Endothelial cell of umbilical vein (primary cell): ENCODE measurements at regions of chr6 and their contacts with region 1.

Region 1: DNA sequence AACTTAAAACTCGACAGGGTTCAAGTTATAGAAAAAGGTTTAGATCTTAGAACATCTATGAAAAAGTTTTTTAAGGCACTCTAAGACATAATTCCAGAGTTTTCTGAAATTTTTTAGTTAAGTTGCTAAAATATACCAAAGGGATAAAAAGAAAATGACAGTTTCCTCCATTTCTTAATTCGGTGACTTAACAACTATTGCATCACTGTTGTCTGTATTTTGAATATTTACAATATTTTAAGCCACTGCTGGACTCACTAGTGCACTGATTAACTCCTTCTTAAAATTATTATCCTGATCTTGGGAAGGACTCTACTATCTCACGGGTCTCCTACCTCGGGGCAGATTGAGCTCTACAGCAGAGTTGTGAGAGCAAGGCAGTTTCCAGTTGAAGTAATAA is 91.0 kb downstream of the ADGB start:
- DNase-seq: no peak
- H3K4me3 ChIP-seq: no peak overlapping the region
- H3K27ac ChIP-seq: no peak overlapping the region
- H3K4me1 ChIP-seq: no peaks in the 10 kb centered on the region
- H3K27me3 ChIP-seq: peaks cover 2 to 8% of the 10 kb centered on the region in 2 experiments
- CTCF ChIP-seq: no peak
- POLR2A ChIP-seq: no peak

Region 2: DNA sequence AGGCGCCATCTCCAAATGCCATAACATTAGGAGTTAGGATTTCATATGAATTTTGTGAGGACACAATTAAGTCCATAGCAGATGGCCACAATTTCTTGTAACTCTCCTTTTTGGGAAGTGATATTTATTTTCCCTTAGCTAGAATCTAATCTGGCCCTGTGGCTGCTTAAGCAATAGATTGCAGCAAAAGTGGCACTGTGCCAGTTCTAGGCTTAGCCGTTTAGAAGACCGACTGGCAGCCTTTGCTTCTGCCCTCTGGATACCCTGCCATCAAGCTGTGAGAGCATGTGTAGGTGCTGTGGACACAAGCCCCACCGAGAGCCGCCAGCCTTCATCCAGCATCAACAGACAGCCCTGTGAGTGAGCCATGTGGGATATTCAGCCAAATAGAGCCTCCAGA is 106.9 kb before region 1 on chr6:
- CTCF ChIA-PET with region 1: no interaction called
- POLR2A ChIA-PET with region 1: no interaction called
- dilution Hi-C with region 1: no loop called
- intact Hi-C with region 1: loop called (anchors 5 kb)
- DNase-seq: no peak
- H3K4me3 ChIP-seq: no peak overlapping the region
- H3K27ac ChIP-seq: no peak overlapping the region
- H3K4me1 ChIP-seq: no peaks in the 10 kb centered on the region
- H3K27me3 ChIP-seq: no peaks in the 10 kb centered on the region
- CTCF ChIP-seq: no peak
- POLR2A ChIP-seq: no peak